ENCODE measurements at regions of chr18 and their contacts with region 1.

Region 1: DNA sequence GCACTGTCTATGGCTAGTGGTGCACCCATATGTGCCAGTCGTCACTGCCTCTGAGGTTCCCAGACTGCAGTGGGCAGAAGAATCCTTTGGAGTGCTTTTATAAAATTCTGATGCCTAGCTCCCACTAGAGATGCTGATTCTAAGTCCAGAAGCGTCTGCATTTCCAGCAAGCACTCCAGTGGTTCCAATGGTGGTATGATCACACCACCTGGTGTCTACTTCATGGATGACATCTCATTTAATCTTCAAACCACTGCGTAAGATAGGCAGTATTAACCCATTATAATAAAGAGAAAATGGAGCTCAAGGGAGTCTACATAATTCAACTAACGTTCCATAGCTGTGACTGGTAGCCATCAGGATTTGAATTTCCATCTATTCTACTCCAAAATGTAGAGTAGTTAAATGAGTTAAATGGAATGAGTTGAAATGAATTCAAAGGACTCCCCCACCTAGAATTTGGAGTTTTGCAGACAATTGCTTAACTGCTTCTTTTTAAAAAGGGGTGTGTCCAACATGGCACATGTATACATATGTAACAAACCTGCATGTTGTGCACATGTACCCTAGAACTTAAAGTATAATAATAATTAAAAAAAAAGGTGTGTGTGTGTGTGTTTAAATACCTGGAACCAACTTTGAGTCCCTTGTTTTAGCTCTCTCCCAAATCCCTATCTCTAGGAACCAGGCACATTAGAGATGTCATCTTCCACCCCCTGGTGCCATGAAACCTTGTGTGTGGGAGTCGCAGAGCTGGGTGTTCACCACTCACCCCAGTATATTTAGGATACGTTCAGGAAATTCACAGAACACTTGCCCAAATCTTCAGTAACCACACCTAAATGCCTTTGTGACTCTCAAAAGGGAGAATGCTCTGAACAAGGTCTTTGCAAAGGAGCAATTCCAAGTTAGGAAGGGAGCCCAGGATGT is 14.1 kb downstream of the LAMA3 start:
- DNase-seq: peak; percentile 55
- H3K4me3 ChIP-seq: no peak overlapping the region
- H3K27ac ChIP-seq: no peak overlapping the region
- H3K27me3 ChIP-seq: peaks cover 34% of the 10 kb centered on the region
- CTCF ChIP-seq: peak; percentile 72

Region 2: DNA sequence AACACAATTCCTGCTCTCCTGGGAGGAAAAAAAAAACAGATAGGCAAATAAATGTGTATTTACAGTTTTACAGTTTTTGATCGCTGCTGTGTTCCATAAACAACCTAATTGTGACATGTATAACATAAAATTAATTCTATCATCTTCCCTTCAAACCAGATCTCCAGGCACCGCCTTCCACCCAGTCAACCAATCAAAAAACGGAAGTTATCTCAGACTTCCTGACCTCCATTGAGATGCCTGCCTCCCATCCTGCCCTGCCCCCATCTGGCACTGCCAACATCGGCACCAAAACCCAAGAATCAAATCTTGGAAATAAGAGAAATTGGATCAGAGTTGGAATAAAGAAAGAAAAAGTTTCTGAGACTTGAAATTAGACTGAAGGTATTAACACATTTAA is 253.3 kb before region 1 on chr18:
- CTCF ChIA-PET with region 1: no interaction called
- POLR2A ChIA-PET with region 1: no interaction called
- DNase-seq: no peak
- H3K4me3 ChIP-seq: no peak overlapping the region
- H3K27ac ChIP-seq: no peak overlapping the region
- H3K27me3 ChIP-seq: peaks cover 3% of the 10 kb centered on the region
- CTCF ChIP-seq: no peak

Region 3: GRCh38 chr18:23498877-23499276 is 204.4 kb before region 1 on chr18:
- CTCF ChIA-PET with region 1: interaction called, 15 read pairs
- POLR2A ChIA-PET with region 1: no interaction called
- DNase-seq: peak; percentile 26
- H3K4me3 ChIP-seq: no peak overlapping the region
- H3K27ac ChIP-seq: peak overlapping the region; percentile 3
- H3K27me3 ChIP-seq: no peaks in the 10 kb centered on the region
- CTCF ChIP-seq: peak; percentile 83

Region 4: DNA sequence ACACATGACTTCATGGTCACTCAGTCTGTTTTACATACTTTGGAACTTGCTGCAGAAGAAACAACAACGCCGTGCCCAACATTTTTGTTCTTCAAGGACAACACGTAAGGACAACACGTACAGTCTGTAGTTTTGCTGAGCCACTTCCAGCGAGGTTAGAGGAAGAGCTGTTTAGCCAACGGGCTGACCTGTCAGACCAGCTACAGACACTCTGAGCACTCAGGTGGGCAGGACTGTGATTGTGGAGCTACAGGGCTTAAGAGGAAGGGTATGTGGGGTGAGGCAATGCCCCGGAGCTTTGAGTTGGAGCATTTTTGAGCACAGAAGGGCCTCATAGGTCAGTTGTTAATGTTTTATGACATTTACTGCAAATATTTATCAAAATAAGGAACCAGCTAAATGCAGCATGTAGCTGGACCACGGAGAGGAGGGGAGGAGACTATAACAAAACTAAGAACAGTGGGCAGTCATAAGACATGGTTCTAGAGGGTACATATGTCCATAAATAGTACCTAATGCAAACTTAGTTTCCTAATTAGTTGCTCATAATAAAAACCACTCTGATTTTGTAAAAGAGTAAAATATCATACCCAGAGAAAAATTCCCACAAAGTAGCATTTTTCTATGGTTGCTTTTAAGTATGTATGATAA is 90.8 kb before region 1 on chr18:
- CTCF ChIA-PET with region 1: interaction called, 15 read pairs
- POLR2A ChIA-PET with region 1: no interaction called
- DNase-seq: no peak
- H3K4me3 ChIP-seq: no peak overlapping the region
- H3K27ac ChIP-seq: no peak overlapping the region
- H3K27me3 ChIP-seq: peaks cover 2% of the 10 kb centered on the region
- CTCF ChIP-seq: no peak

Region 5: DNA sequence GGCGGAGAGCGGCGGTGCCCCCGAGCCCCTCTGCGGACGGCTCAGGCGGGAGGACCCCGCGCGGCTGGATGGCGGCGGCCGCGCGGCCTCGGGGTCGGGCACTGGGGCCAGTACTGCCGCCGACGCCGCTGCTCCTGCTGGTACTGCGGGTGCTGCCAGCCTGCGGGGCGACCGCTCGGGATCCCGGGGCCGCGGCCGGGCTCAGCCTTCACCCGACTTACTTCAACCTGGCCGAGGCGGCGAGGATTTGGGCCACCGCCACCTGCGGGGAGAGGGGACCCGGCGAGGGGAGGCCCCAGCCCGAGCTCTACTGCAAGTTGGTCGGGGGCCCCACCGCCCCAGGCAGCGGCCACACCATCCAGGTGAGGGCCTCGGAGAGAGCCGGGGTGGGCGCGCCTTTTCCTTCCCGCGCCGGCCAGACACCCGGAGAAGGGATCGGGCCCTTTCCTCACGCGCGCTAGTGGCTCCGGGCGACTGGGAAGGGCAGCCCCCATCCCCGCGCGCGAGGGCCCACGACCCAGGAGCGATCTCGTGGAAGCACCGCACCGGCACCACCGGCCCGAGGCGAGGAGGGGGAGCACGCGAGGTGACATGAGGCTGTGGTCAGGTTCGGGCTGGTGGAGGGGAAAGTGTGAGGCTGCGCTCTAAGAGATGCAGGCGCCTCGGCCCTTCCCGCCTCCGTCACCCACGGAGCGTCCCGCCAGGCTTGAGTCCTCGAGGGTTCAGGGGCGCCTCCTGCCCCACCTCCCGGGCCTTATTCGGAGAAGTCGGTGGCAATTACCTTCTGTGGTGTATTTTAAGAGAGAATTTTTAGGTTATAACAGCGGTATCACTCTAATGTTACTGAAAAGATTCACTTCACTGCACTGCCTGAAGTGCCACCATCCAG is 13.5 kb before region 1 on chr18:
- CTCF ChIA-PET with region 1: interaction called, 14 read pairs
- POLR2A ChIA-PET with region 1: no interaction called
- DNase-seq: no peak
- H3K4me3 ChIP-seq: peak overlapping the region; percentile 45
- H3K27ac ChIP-seq: no peak overlapping the region
- H3K27me3 ChIP-seq: peaks cover 42% of the 10 kb centered on the region
- CTCF ChIP-seq: no peak

Region 6: GRCh38 chr18:23719634-23720201 is 16.4 kb after region 1 on chr18:
- CTCF ChIA-PET with region 1: interaction called, 15 read pairs
- POLR2A ChIA-PET with region 1: interaction called, 5 read pairs
- DNase-seq: peak; percentile 88
- H3K4me3 ChIP-seq: no peak overlapping the region
- H3K27ac ChIP-seq: peak overlapping the region; percentile 84
- H3K27me3 ChIP-seq: no peaks in the 10 kb centered on the region
- CTCF ChIP-seq: no peak